AG04450 (cell line): ENCODE measurements at regions of chr11 and their contacts with region 1.

Region 1: GRCh38 chr11:130924770-130925169 is 8.5 kb upstream of the SNX19 start:
- DNase-seq: no peak
- H3K4me3 ChIP-seq: no peak overlapping the region
- H3K27ac ChIP-seq: no peak overlapping the region
- H3K27me3 ChIP-seq: no peaks in the 10 kb centered on the region
- CTCF ChIP-seq: no peak

Region 2: DNA sequence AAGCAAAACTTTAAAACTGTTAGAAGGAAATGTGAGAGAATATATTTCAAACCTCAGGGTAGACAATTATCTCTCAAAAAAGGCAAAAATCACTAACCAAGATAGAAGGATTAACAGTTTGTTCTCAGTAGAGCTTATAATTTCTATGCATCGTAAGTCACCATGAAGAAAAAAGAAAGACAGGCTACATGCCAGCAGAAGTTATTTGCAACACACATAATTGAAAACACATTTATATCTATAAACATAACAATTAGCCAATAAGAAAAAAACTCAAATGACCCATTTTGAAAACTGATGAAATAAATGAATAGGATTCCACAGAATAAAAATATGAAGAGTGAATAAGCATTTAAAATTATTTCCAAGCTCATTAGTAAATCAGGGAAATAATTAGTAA is 15.9 kb after region 1 on chr11:
- CTCF ChIA-PET with region 1: interaction called, 10 read pairs
- POLR2A ChIA-PET with region 1: no interaction called
- DNase-seq: no peak
- H3K4me3 ChIP-seq: no peak overlapping the region
- H3K27ac ChIP-seq: no peak overlapping the region
- H3K27me3 ChIP-seq: no peaks in the 10 kb centered on the region
- CTCF ChIP-seq: no peak

Region 3: GRCh38 chr11:130979386-130979972 is 54.7 kb after region 1 on chr11:
- CTCF ChIA-PET with region 1: interaction called, 21 read pairs
- POLR2A ChIA-PET with region 1: no interaction called
- DNase-seq: peak; percentile 30
- H3K4me3 ChIP-seq: no peak overlapping the region
- H3K27ac ChIP-seq: no peak overlapping the region
- H3K27me3 ChIP-seq: peaks cover 8% of the 10 kb centered on the region
- CTCF ChIP-seq: peak; percentile 77